ENCODE measurements at regions of chr6 and their contacts with region 1.

Region 1: DNA sequence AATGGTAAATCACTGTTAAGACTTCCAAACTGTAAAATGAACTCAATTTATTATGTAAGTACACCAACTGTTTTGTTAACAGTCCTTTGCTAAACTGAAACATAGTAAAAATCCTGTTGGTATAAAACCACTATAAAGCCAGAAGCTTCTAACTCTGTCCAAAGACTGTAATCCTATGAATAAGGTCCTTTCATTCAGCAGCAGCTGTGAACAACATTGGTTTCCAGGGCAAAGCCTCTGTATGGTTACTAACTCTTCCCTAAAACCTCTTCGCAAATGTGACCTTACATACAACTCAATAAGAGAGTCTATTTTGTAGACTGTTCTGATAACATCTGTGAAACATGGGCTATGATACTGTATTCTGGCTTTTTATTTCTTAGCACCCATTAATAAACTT is 40.1 kb downstream of the NUP153 start:
- DNase-seq: no peak
- H3K4me3 Mint-ChIP-seq: no peak overlapping the region
- H3K27ac Mint-ChIP-seq: peak overlapping the region; percentile 59
- H3K4me1 Mint-ChIP-seq: peaks cover 43% of the 10 kb centered on the region
- H3K27me3 Mint-ChIP-seq: no peaks in the 10 kb centered on the region

Region 2: GRCh38 chr6:17648745-17649144 is 17.9 kb before region 1 on chr6:
- intact Hi-C with region 1: loop called (anchors 2 kb)
- DNase-seq: no peak
- H3K4me3 Mint-ChIP-seq: no peak overlapping the region
- H3K27ac Mint-ChIP-seq: no peak overlapping the region
- H3K4me1 Mint-ChIP-seq: peaks cover 30% of the 10 kb centered on the region
- H3K27me3 Mint-ChIP-seq: no peaks in the 10 kb centered on the region

Region 3: GRCh38 chr6:17656092-17656491 is 10.6 kb before region 1 on chr6:
- intact Hi-C with region 1: loop called (anchors 1 kb)
- DNase-seq: no peak
- H3K4me3 Mint-ChIP-seq: no peak overlapping the region
- H3K27ac Mint-ChIP-seq: peak overlapping the region; percentile 70
- H3K4me1 Mint-ChIP-seq: peaks cover 35% of the 10 kb centered on the region
- H3K27me3 Mint-ChIP-seq: no peaks in the 10 kb centered on the region

Region 4: DNA sequence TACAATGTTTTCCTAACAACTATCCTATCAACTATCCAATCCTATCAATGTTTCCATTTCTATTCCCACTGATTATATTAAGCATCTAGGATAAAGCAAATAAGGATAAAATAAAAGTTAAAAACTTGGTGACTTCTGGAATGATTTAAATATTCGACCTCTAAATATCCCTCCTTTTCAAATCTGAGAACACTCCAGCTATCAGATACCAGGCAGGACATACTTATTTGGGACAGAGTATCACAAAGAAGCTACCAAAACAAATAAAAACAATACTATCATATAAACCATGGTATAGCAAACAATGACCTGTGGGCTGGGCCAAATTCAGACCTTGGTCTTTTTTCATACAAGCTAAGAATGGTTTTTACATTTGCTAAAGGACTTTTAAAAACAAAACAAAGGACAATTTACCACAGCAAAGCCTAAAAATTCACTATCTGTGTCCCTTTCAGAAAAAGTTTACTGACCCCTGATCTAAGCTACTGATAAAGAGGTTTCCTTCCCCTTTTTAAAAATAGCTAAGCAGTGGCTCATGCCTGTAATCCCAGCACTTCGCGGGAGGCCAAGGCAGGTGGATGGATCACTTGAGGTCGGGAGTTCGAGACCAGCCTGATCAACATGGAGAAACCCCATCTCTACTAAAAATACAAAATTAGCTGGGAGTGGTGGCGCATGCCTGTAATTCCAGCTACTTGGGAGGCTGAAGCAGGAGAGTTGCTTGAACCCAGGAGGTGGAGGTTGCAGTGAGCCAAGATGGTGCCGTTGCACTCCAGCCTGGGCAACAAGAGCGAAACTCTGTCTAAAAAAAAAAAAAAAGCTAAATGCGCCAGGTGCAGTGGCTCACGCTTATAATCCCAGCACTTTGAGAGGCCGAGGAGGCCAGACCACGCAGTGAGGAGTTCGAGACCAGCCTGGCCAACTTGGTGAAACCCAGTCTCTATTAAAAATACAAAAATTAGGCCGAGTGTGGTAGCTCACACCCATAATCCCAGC is 34.1 kb after region 1 on chr6:
- intact Hi-C with region 1: loop called (anchors 5 kb)
- DNase-seq: no peak
- H3K4me3 Mint-ChIP-seq: no peak overlapping the region
- H3K27ac Mint-ChIP-seq: peak overlapping the region; percentile 29
- H3K4me1 Mint-ChIP-seq: peaks cover 39% of the 10 kb centered on the region
- H3K27me3 Mint-ChIP-seq: no peaks in the 10 kb centered on the region